CD8-positive, alpha-beta T cell (primary cell): ENCODE measurements at regions of chr9 and their contacts with region 1.

Region 1: GRCh38 chr9:71783120-71783530 is 14.8 kb upstream of the CEMIP2 start:
- DNase-seq: peak; percentile 76 to 98 (median 85)
- ATAC-seq: peak; percentile 94
- H3K4me3 ChIP-seq: peak overlapping the region; percentile 4 to 10
- H3K4me3 Mint-ChIP-seq: peak overlapping the region; percentile 55
- H3K27ac ChIP-seq: peak overlapping the region; percentile 77 to 90
- H3K27ac Mint-ChIP-seq: peak overlapping the region; percentile 97
- H3K4me1 ChIP-seq: peaks cover 40% of the 10 kb centered on the region
- H3K4me1 Mint-ChIP-seq: peaks cover 47% of the 10 kb centered on the region
- H3K27me3 ChIP-seq: no peaks in the 10 kb centered on the region
- H3K27me3 Mint-ChIP-seq: no peaks in the 10 kb centered on the region
- CTCF ChIP-seq: peak; percentile 51

Region 2: DNA sequence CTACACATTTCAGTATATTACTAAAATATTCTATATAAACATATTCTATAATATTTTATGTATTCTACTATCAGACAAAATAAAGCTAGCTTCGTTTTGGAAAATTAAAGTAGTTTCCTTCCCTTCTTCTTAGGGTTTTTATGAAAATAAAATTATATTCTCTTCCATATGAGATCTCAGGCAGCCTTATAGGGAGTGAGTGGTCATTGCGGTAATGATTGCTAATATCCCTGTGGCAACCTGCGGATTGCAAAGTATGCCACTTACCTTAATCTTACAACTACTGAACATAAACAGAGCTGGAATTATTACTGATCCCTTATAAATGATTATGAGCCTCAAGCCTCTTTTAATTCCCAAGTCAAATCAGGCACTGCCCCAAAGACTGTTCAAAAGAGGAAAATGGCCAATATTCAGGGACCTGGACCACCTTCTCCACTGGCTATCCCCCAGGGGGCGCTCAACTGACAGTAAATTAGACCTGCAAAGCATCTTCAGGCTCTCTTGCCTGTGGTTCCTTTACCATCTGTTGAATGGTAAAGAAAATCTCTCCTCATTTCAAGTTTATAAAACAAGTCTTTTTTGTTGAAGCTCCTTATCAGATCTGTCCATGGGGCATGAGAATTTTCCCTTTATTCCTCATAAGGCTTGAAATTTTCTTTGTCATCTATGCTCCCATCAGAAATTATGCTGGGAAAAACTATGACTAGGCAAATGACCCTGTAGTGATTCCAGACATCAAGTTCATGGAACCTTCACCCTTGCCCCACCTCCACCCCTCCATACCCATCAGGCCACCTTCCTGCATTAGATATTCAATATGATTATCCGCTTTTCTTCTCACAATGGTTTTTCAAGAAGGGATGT is 178.7 kb before region 1 on chr9:
- CTCF ChIA-PET with region 1: interaction called, 7 read pairs
- POLR2A ChIA-PET with region 1: no interaction called
- intact Hi-C with region 1: loop called in 1 of 2 experiments (anchors 1 kb)
- DNase-seq: peak; percentile 57 to 88 (median 79)
- ATAC-seq: peak; percentile 66
- H3K4me3 ChIP-seq: no peak overlapping the region
- H3K4me3 Mint-ChIP-seq: no peak overlapping the region
- H3K27ac ChIP-seq: no peak overlapping the region
- H3K27ac Mint-ChIP-seq: no peak overlapping the region
- H3K4me1 ChIP-seq: no peaks in the 10 kb centered on the region
- H3K4me1 Mint-ChIP-seq: no peaks in the 10 kb centered on the region
- H3K27me3 ChIP-seq: no peaks in the 10 kb centered on the region
- H3K27me3 Mint-ChIP-seq: no peaks in the 10 kb centered on the region
- CTCF ChIP-seq: peak; percentile 81

Region 3: GRCh38 chr9:71795097-71795813 is 12.1 kb after region 1 on chr9:
- CTCF ChIA-PET with region 1: interaction called, 71 read pairs
- POLR2A ChIA-PET with region 1: interaction called, 58 read pairs
- intact Hi-C with region 1: loop called (anchors 1 to 2 kb)
- DNase-seq: peak in 3 of 9 experiments; percentile 27 to 83 (median 64)
- ATAC-seq: peak; percentile 86
- H3K4me3 ChIP-seq: peak overlapping the region in 1 of 2 experiments; percentile 17
- H3K4me3 Mint-ChIP-seq: peak overlapping the region; percentile 53
- H3K27ac ChIP-seq: peak overlapping the region; percentile 52 to 82
- H3K27ac Mint-ChIP-seq: peak overlapping the region; percentile 96
- H3K4me1 ChIP-seq: peaks cover 58% of the 10 kb centered on the region
- H3K4me1 Mint-ChIP-seq: peaks cover 70% of the 10 kb centered on the region
- H3K27me3 ChIP-seq: no peaks in the 10 kb centered on the region
- H3K27me3 Mint-ChIP-seq: no peaks in the 10 kb centered on the region
- CTCF ChIP-seq: no peak

Region 4: DNA sequence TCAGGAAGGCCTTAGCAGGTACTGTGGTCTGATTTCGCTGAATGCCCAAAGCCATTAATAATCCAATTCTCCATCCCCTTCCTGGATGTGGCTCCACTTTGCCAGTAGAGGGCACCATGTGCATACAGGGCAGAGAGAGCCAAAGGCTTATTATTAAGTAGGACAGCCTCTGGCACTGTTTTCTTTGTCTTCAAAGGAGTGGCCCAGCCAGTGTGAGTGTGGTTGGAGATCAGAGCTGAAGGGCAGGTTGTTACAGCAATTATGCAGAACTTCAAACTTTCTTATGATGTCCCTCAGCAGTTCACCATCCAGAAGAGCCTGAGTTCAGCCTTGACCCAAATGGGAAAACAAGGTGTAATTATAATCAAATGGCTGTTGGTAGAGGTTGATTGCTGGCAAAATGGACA is 23.8 kb after region 1 on chr9:
- CTCF ChIA-PET with region 1: interaction called, 85 read pairs
- POLR2A ChIA-PET with region 1: interaction called, 6 read pairs
- intact Hi-C with region 1: loop called in 1 of 2 experiments (anchors 2 kb)
- DNase-seq: peak; percentile 12 to 80 (median 62)
- ATAC-seq: peak; percentile 96
- H3K4me3 ChIP-seq: no peak overlapping the region
- H3K4me3 Mint-ChIP-seq: no peak overlapping the region
- H3K27ac ChIP-seq: no peak overlapping the region
- H3K27ac Mint-ChIP-seq: peak overlapping the region; percentile 27
- H3K4me1 ChIP-seq: peaks cover 6% of the 10 kb centered on the region
- H3K4me1 Mint-ChIP-seq: peaks cover 15% of the 10 kb centered on the region
- H3K27me3 ChIP-seq: no peaks in the 10 kb centered on the region
- H3K27me3 Mint-ChIP-seq: no peaks in the 10 kb centered on the region
- CTCF ChIP-seq: peak; percentile 91

Region 5: GRCh38 chr9:71911253-71912074 is 128.3 kb after region 1 on chr9 and contains the start of gene C9orf85:
- CTCF ChIA-PET with region 1: interaction called, 5 read pairs
- POLR2A ChIA-PET with region 1: interaction called, 11 read pairs
- intact Hi-C with region 1: loop called (anchors 2 to 5 kb)
- DNase-seq: peak; percentile 91 to 99 (median 96)
- ATAC-seq: peak; percentile 93
- H3K4me3 ChIP-seq: peak within 1 kb of the TSS; percentile 80 to 89
- H3K4me3 Mint-ChIP-seq: peak within 1 kb of the TSS; percentile 99
- H3K27ac ChIP-seq: peak within 1 kb of the TSS; percentile 63 to 84
- H3K27ac Mint-ChIP-seq: peak within 1 kb of the TSS; percentile 96
- H3K4me1 ChIP-seq: peaks cover 26% of the 10 kb centered on the region
- H3K4me1 Mint-ChIP-seq: peaks cover 71% of the 10 kb centered on the region
- H3K27me3 ChIP-seq: no peaks in the 10 kb centered on the region
- H3K27me3 Mint-ChIP-seq: no peaks in the 10 kb centered on the region
- CTCF ChIP-seq: no peak
- total RNA-seq, gene C9orf85: 3.1 to 4.0 TPM

Region 6: GRCh38 chr9:71937070-71937625 is 154.0 kb after region 1 on chr9:
- CTCF ChIA-PET with region 1: no interaction called
- POLR2A ChIA-PET with region 1: no interaction called
- intact Hi-C with region 1: no loop called
- DNase-seq: no peak
- ATAC-seq: no peak
- H3K4me3 ChIP-seq: no peak overlapping the region
- H3K4me3 Mint-ChIP-seq: no peak overlapping the region
- H3K27ac ChIP-seq: no peak overlapping the region
- H3K27ac Mint-ChIP-seq: no peak overlapping the region
- H3K4me1 ChIP-seq: no peaks in the 10 kb centered on the region
- H3K4me1 Mint-ChIP-seq: peaks cover 32% of the 10 kb centered on the region
- H3K27me3 ChIP-seq: no peaks in the 10 kb centered on the region
- H3K27me3 Mint-ChIP-seq: no peaks in the 10 kb centered on the region
- CTCF ChIP-seq: no peak

Region 7: DNA sequence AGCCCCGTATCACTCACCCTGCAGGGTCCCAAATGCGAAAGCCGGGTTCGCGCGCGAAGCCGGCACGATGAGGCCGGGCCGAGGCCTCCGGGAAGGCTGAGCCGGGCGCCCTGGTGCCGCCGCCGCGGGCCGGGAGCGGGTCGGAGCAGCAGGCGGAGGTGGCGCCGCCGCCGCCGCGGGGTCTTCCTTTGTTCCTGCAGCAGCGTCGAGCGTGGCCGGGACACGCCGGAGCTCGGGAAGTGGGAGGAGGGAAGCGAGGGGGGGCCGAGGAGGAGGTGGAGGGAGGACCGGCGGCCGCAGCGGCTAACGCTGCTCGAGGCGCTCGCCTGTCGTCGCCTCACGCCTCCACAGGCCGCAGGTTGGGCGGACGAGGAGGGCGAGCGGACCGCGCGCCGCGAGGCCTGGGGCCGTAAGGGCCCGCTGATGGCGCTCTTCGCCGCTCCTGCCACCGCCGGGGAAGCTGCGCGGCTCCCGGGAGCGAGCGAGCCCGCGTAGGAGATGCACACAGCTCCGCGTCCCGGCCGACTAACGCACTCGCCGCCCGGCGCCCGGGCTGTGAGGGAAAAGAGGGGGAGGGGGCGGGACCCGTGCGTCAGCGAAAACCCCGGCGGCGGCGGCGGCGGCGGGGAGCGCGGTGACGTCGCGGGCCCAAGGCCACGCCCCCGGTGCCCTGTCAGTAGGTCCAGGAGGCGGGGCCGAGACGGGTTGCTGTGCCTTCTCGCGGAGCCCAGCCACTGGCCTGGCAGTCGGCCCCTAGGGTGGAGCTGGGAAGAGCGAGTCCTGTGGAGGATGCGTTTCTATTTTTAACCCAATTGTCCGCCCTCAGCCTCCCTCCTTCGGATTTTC is 581.8 kb after region 1 on chr9 and contains the start of gene ZFAND5:
- CTCF ChIA-PET with region 1: no interaction called
- POLR2A ChIA-PET with region 1: no interaction called
- intact Hi-C with region 1: loop called in 1 of 2 experiments (anchors 5 kb)
- DNase-seq: peak; percentile 86 to 98 (median 94)
- ATAC-seq: peak; percentile 79
- H3K4me3 ChIP-seq: peak within 1 kb of the TSS; percentile 74 to 88
- H3K4me3 Mint-ChIP-seq: peak within 1 kb of the TSS; percentile 91
- H3K27ac ChIP-seq: peak within 1 kb of the TSS; percentile 95 to 97
- H3K27ac Mint-ChIP-seq: peak within 1 kb of the TSS; percentile 98
- H3K4me1 ChIP-seq: peaks cover 41% of the 10 kb centered on the region
- H3K4me1 Mint-ChIP-seq: peaks cover 41% of the 10 kb centered on the region
- H3K27me3 ChIP-seq: no peaks in the 10 kb centered on the region
- H3K27me3 Mint-ChIP-seq: no peaks in the 10 kb centered on the region
- CTCF ChIP-seq: no peak
- total RNA-seq, gene ZFAND5: 355 to 361 TPM

Region 8: DNA sequence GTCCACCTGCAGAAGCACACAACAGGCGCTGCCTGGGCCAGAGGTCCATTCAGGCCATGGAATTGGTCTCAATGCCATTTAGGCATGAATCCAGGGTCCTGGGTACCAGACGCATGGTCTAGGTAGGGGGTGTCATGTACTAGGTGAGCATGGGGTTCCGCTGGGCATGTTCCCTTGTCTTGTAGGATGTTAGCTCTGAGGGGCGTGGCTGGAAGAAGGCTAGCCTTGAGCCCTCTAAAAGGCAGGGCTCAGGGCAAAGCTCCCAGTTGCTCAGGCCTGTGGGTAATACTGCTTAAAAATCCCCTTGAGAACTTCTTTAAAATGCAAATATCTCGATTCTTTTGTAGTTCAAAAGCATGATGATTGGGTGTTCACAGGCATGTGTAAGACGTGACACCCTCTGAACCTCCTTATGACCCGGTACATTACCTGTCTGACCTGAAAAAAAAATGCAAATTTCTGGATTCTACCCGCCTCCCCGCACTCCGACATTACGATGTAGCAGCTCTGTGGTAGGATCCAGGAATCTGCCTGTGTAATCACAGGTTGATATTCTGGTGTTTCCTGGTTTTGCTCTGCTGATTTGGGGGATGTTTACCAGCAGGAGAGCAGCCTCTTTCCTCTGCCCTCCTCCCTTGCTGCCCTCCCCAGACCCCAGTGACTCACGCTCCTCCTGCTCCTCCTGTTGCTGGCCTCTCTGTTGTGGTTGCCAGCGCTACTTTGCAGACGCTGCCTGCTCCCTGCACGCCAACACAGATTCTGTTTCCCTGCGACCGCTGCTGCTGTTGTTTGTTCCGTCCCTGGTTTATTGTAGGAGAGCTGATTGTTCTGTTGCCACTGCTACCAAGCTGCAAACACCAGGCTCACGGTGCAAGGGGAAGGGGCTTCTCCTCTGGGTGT is 744.0 kb after region 1 on chr9:
- CTCF ChIA-PET with region 1: no interaction called
- POLR2A ChIA-PET with region 1: no interaction called
- intact Hi-C with region 1: loop called in 1 of 2 experiments (anchors 5 kb)
- DNase-seq: peak; percentile 45 to 88 (median 82)
- ATAC-seq: peak; percentile 86
- H3K4me3 ChIP-seq: peak overlapping the region; percentile 32 to 43
- H3K4me3 Mint-ChIP-seq: peak overlapping the region; percentile 86
- H3K27ac ChIP-seq: peak overlapping the region; percentile 43 to 66
- H3K27ac Mint-ChIP-seq: peak overlapping the region; percentile 94
- H3K4me1 ChIP-seq: peaks cover 18% of the 10 kb centered on the region
- H3K4me1 Mint-ChIP-seq: peaks cover 30% of the 10 kb centered on the region
- H3K27me3 ChIP-seq: no peaks in the 10 kb centered on the region
- H3K27me3 Mint-ChIP-seq: no peaks in the 10 kb centered on the region
- CTCF ChIP-seq: no peak